Adrenal gland (tissue), 19 donors: ENCODE measurements at regions of chr9 and their contacts with region 1.

Region 1: DNA sequence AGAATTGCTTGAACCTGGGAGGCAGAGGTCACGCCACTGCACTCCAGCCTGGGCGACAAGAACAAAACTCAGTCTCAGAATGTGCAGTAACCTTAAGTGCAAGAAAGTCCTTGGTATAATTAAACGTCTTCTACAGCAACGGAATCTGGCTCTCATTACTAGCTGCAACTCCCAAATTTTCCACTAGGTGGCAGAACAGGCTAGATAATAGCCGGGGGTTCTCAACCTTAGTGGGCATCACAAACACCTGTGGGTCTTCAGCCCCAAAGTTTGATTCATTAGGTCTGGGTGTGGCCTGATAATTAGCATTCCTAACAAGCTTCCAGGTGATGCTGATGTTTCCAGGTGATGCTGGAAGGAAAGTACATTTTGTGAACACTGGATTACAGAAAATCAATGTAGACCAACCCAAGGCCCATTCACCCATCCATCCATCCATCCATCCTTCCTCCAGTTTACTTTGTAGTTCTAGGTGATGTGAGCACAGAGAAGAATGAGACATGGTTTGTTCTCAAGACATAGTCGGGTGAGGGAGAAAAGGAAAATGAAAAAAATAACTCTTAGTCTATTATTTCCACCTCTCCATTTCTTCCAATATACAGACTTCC is 37.3 kb downstream of the FBXW2 start:
- DNase-seq: peak in 6 of 7 donors; percentile 29 to 79 (median 62)
- H3K4me3 ChIP-seq: no peak overlapping the region
- H3K27ac ChIP-seq: no peak overlapping the region
- H3K4me1 ChIP-seq: peaks cover 0 to 10% of the 10 kb centered on the region in 2 donors
- H3K27me3 ChIP-seq: no peaks in the 10 kb centered on the region
- CTCF ChIP-seq: peak; percentile 80 to 94 (median 91)
- POLR2A ChIP-seq: no peak

Region 2: DNA sequence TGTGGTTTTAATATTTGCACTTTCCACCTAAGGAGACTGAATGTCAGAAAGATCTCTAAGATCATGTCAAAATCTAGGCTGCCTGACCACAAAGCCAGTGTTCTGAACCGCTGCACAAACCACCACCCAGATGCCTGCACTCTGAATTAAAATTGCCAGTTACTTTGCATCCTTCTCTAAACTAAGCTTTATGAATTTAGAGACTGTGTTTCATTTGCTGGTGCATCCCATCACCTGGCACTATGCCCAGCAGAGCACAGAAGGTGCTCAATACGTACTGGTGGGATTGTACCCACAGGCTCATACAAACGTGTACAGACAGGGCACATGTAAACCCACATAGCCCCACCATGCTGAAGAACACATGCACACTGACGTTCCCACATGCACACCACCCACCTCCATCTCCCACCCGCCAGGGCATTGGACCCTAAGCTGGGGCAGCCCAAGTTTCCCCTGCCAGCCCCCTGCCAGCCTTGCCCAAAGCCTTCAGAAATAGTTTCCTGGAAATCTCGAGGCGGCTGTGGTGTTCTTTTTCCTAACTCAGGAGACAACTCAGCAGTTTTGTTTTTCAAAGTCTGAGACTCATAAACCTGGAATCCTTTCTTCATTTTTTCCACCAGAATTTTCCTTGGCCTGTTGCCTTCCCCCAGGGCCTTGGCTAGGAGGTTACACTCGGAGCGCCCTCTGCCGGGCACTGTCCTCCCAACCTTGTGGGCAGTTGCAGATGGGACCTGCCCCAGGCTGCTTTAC is 180.3 kb after region 1 on chr9:
- intact Hi-C with region 1: loop called in 1 of 2 experiments (anchors 10 kb)
- DNase-seq: peak; percentile 94 to 98 (median 97)
- H3K4me3 ChIP-seq: no peak overlapping the region
- H3K27ac ChIP-seq: peak overlapping the region; percentile 25 to 94 (median 73)
- H3K4me1 ChIP-seq: peaks cover 30 to 61% of the 10 kb centered on the region in 2 donors
- H3K27me3 ChIP-seq: no peaks in the 10 kb centered on the region
- CTCF ChIP-seq: peak; percentile 87 to 94 (median 93)
- POLR2A ChIP-seq: no peak